ENCODE measurements at regions of chr9 and their contacts with region 1.

Region 1: DNA sequence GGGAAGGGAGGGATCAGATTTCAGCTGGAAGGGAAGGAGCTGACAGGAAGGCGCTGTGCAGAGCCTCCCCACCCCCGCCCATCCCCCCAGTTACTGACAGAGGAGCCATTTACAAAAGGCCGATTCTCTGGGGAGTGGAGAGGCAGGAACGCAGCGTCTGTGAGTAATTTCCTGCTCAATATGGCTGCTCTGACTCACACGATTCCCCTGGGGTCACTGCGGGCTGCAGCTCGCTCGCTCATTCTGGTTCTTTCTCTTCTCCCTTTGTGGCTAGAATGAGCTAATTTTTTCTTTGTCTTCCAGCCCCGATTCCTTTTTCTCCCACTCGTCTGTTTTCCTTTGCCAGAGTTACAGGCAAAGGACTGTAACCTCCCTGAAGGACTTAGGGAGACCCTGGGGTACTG is 28.8 kb downstream of the PTPA start:
- DNase-seq: peak; percentile 89 to 99
- ATAC-seq: peak; percentile 69 to 84 (median 77)
- H3K4me3 ChIP-seq: peak overlapping the region; percentile 37 to 62 (median 54)
- H3K27ac ChIP-seq: peak overlapping the region; percentile 100
- H3K4me1 ChIP-seq: peaks cover 49 to 79% (median 71%) of the 10 kb centered on the region in 9 donors
- H3K27me3 ChIP-seq: no peaks in the 10 kb centered on the region
- CTCF ChIP-seq: no peak

Region 2: DNA sequence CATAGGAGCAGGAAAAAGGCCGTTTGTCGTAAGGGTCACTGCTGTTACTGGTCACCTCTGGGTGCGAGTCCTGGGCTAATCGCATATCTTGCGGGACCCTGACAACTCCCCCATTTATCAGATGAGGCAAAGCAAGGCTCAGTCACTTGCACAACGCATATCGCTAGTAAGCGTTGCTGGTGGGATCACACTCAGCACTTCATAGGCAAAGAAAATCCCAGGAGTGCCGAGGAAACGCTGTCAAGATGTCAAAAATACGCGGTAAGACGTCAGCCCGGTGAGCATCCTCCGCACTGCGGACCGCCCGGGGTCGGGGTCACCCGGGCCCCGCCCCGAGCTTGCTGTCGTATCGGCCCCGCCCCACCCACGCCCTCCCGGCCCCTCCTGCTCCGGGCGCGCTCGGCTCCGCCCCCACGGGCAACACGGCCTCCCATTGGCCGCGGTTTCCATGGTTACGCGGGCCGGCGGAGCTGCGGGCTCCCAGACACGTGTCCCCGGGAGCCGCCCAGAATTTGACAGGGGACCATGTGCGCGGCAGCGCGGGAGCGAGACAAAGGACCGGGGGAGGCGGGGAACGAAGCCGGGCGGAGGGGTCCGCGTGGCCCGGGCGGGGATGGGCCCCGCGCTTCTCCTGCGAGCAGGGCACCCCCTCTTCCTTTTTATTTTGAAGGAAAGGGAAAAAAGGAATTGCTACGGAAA is 118.3 kb after region 1 on chr9:
- intact Hi-C with region 1: loop called in 2 of 10 experiments (anchors 5 to 10 kb)
- DNase-seq: peak; percentile 91 to 94
- ATAC-seq: peak; percentile 70 to 85 (median 80)
- H3K4me3 ChIP-seq: peak overlapping the region in 8 of 10 donors; percentile 5 to 46 (median 34)
- H3K27ac ChIP-seq: peak overlapping the region in 6 of 10 donors; percentile 9 to 59 (median 51)
- H3K4me1 ChIP-seq: peaks cover 5 to 53% (median 36%) of the 10 kb centered on the region in 9 donors
- H3K27me3 ChIP-seq: peaks cover 0 to 19% (median 0%) of the 10 kb centered on the region in 7 donors
- CTCF ChIP-seq: no peak

Region 3: DNA sequence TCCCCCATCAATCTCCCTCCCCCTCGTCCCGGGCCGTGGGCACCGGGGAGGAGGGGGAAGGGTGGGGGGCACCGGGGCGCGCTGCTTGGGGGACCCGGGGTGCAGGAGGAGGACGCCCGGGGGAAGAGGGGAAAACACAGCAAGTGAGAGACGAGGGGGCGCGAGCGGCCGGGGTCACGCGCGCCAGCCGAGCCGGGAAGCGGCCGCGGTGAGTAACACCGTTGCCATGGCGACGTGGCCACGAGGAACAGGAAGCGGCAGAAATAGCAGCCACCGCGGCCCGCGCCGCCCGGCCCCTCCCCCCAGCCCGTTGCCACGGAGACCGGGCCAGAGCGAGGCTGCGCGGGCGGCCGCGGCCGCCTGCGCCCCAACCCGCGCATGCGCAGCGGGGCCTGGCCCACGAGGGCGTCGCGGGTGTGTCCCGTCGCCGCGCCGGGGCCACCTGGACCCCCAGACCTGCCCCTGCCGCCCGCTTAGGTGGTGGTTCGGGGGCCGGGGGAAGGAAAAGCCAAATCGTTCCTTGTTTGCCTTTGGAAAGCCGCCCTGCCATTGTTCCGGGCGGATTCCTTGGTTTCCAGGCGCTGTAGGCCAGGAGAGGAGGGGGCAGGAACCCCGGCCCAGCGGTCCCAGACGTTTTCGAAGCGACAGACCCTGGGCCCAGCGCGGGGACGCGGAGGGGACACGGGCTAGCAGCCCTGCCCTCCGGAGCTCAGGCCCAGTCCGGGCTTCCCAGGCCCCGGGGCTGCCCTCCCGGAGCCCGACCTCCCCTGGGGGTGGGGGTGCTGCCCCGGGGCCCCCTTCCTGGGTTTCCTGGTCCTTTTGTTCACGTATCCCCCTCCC is 273.8 kb after region 1 on chr9:
- intact Hi-C with region 1: loop called in 3 of 10 experiments (anchors 1 to 10 kb)
- DNase-seq: peak; percentile 99 to 100
- ATAC-seq: peak; percentile 85 to 92 (median 88)
- H3K4me3 ChIP-seq: peak overlapping the region; percentile 47 to 74 (median 61)
- H3K27ac ChIP-seq: peak overlapping the region; percentile 97 to 100 (median 100)
- H3K4me1 ChIP-seq: peaks cover 18 to 53% (median 31%) of the 10 kb centered on the region in 9 donors
- H3K27me3 ChIP-seq: no peaks in the 10 kb centered on the region
- CTCF ChIP-seq: no peak

Region 4: GRCh38 chr9:129436751-129437625 is 297.0 kb after region 1 on chr9:
- intact Hi-C with region 1: no loop called
- DNase-seq: peak; percentile 69 to 76
- ATAC-seq: peak; percentile 78 to 89 (median 84)
- H3K4me3 ChIP-seq: peak overlapping the region; percentile 41 to 61 (median 56)
- H3K27ac ChIP-seq: peak overlapping the region; percentile 39 to 86 (median 72)
- H3K4me1 ChIP-seq: peaks cover 5 to 32% (median 18%) of the 10 kb centered on the region in 9 donors
- H3K27me3 ChIP-seq: peaks cover 0 to 40% (median 0%) of the 10 kb centered on the region in 7 donors
- CTCF ChIP-seq: no peak

Region 5: DNA sequence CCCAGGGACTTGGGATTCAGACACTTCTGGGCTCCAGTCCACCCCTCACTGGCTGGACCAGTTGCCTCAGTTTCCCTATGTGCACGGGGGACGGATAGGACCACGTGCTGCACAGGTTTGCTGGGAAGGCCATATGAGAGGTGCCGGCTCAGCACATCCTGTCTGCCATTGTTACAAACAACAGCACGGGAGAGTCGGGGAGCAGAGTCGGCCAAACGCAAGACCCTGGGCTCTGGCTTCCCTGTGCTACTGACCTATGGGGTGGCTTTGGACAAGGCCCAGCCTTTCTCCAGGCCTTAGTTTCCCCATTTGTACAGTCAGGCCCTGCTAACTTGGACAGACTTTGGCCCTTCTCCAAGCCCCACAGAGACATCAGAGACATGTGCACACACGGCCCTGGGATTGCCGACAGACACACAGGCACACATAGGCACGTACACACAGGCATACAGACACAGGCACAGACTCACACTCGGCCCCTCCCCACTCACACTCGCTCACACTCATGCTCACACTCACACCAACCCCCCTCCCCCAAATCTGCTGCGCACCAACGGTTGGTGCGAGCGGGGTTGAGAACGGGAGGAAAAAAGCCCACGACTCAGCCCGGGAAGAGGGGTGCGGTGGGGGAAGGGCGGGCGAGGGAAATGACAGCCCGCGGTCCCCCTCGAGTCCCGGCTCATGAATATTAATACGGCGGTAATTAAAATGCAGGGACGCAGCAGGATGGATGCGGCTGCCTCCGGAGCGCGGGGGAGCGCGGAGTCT is 347.8 kb after region 1 on chr9:
- intact Hi-C with region 1: loop called in 8 of 10 experiments (anchors 2 to 10 kb)
- DNase-seq: peak; percentile 53 to 65
- ATAC-seq: peak in 5 of 8 donors; percentile 0 to 12 (median 5)
- H3K4me3 ChIP-seq: peak overlapping the region; percentile 44 to 61 (median 56)
- H3K27ac ChIP-seq: peak overlapping the region; percentile 96 to 100 (median 99)
- H3K4me1 ChIP-seq: peaks cover 33 to 94% (median 70%) of the 10 kb centered on the region in 9 donors
- H3K27me3 ChIP-seq: no peaks in the 10 kb centered on the region
- CTCF ChIP-seq: no peak

Region 6: DNA sequence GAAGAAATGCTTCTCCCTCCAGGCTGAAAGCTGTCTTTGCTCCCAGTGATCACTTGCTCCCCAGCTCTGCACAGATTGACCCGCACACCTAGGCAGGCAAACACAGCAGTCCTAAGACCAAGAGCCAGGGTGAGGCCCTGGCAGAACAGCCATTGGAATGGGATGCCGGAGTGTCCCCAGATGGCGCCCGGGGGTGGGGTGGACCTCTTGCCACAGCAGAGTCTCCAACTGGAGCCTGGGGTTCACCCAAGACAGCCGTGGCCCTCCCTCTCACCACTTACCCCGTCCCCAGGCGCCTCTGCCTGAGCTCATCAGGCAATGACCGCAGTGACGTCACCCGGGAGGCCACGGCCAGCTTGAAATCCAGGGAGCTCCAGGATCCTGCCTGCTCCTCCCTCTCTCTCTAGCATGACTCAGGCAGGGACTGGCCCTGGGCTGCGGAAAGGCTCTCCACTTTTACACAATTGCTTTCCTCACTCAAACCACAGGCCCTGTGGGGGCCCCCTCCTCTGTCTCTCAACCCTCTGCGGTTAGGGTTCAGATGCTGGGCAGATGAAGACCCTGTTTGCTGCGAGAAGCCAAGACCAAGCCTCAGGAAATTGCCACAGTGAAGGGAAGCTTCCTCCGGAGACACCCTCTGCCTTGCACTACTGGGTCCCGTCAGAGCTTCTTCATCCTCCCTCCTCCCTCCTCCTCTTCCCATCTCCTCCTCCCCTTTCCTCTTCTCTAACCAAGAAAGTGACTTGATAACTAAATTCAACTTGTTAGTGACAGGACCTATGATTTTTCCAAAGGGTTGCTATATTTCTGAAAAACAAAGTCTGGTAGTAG is 637.2 kb after region 1 on chr9:
- intact Hi-C with region 1: loop called in 3 of 10 experiments (anchors 10 kb)
- DNase-seq: peak; percentile 93
- ATAC-seq: peak; percentile 96 to 99 (median 97)
- H3K4me3 ChIP-seq: peak overlapping the region in 5 of 10 donors; percentile 8 to 18 (median 14)
- H3K27ac ChIP-seq: peak overlapping the region in 9 of 10 donors; percentile 23 to 81 (median 54)
- H3K4me1 ChIP-seq: peaks cover 0 to 53% (median 16%) of the 10 kb centered on the region in 9 donors
- H3K27me3 ChIP-seq: no peaks in the 10 kb centered on the region
- CTCF ChIP-seq: no peak

Measured in heart right ventricle (tissue), 16 donors.